Right ventricle myocardium inferior (tissue), 1 donor: ENCODE measurements at regions of chr3 and their contacts with region 1.

Region 1: GRCh38 chr3:133988631-133989161 is 41.0 kb downstream of the SLCO2A1 start:
- DNase-seq: no peak
- ATAC-seq: no peak

Region 2: GRCh38 chr3:133944641-133945380 is 43.9 kb before region 1 on chr3:
- intact Hi-C with region 1: loop called (anchors 5 kb)
- DNase-seq: no peak
- ATAC-seq: peak; percentile 7